H1 (cell line): ENCODE measurements at regions of chr3 and their contacts with region 1.

Region 1: DNA sequence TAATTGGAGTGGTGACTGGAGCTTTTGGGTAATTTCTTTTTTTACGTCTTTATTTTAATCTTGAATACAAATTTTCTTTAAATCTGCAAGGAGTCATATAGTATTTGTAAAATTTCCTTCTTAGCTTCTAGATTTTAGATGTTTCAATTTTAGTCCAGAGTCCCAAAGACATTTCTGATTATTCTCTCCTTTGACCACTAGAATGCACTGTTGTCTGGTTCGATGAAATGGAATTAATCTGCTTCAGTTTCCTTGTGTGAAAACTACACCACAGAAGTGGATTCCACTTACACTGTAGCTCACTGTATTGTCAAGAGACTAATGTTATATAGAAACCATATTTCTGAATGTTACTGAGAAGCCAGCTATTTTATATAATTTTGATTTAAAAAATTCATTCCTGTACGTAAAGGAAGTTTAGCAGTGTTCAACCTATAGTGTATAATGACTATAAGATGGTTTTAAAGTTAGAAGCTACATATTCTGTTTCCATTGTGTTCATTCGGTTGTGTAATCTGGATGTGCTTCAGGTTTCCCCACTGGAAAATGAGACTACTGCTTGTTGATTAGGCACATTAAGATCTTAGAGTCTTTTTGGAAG is 6.1 kb downstream of the GRAMD1C start:
- DNase-seq: no peak
- H3K4me3 ChIP-seq: no peak overlapping the region
- H3K27ac ChIP-seq: no peak overlapping the region
- H3K4me1 ChIP-seq: no peaks in the 10 kb centered on the region
- H3K27me3 ChIP-seq: no peaks in the 10 kb centered on the region
- CTCF ChIP-seq: peak in 2 of 3 experiments; percentile 30 to 57; a peak in 2 of 4 replicates
- EP300 ChIP-seq: no peak
- POLR2A ChIP-seq: no peak
- RAD21 ChIP-seq: peak; percentile 56 to 62

Region 2: DNA sequence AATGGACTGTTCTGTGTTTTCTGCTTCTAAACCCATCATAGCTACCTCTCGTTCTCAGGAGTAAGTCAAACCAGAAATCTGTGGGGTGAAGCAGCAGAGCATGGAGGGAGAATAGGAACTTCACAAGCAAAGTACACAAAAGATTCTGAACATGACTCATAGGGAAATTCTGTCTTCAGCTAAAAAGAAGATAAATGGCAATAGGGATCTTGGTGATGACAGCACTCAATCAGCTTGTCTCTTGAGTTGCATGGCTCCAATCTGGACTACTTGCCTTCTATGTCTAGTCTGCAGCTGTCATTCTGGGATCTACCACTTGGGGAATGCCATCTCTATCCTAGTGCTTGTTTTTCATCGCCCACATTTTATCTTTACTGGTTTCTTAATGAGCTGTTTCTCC is 19.6 kb before region 1 on chr3:
- CTCF ChIA-PET with region 1: interaction called, 16 read pairs
- POLR2A ChIA-PET with region 1: no interaction called
- DNase-seq: no peak
- H3K4me3 ChIP-seq: no peak overlapping the region
- H3K27ac ChIP-seq: no peak overlapping the region
- H3K4me1 ChIP-seq: peaks cover 0 to 4% (median 0%) of the 10 kb centered on the region in 4 experiments; a peak in 1 of 7 replicates
- H3K27me3 ChIP-seq: no peaks in the 10 kb centered on the region
- CTCF ChIP-seq: peak in 1 of 3 experiments; percentile 52; a peak in 1 of 4 replicates
- EP300 ChIP-seq: no peak
- POLR2A ChIP-seq: no peak
- RAD21 ChIP-seq: peak in 1 of 2 experiments; percentile 26; a peak in 2 of 4 replicates

Region 3: DNA sequence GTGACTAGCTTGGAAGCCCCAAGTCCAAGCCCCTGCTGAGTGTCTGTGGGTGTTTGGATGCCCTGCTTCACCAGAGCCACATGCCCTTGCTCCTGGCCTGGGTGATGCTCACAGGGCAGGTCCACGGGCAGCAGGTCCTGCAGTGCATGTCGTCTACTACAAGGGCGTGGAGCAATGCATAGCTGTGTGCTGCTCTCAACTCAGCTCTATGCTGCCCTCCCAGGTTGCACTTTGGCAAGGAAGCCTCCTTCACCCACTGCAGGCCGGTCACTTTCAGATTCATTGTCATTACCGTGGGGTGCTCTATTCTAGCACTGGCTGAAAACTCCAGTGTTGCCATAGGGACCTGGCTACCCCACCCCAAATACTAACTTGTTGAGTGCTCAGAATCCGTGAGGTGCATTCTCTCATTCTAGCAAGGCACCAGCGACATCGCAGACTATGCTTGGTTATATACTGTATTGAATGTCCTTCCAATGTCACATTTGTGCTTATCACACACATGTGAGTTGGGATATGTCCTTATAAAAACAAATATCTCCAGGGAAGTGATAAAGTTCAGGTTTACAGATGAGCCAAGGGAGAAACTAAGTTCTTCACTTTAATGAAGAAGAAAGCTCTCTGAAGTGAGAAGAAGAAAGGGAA is 45.7 kb after region 1 on chr3:
- CTCF ChIA-PET with region 1: interaction called, 15 read pairs
- POLR2A ChIA-PET with region 1: no interaction called
- DNase-seq: peak in 1 of 2 experiments; percentile 49
- H3K4me3 ChIP-seq: no peak overlapping the region
- H3K27ac ChIP-seq: no peak overlapping the region
- H3K4me1 ChIP-seq: peaks cover 0 to 3% (median under 1%) of the 10 kb centered on the region in 4 experiments; a peak in 2 of 7 replicates
- H3K27me3 ChIP-seq: no peaks in the 10 kb centered on the region
- CTCF ChIP-seq: peak; percentile 14 to 49 (median 40); a peak in 3 of 4 replicates
- EP300 ChIP-seq: no peak
- POLR2A ChIP-seq: no peak
- RAD21 ChIP-seq: peak; percentile 26 to 43; a peak in 3 of 4 replicates

Region 4: GRCh38 chr3:113898751-113899291 is 54.1 kb after region 1 on chr3:
- CTCF ChIA-PET with region 1: interaction called, 10 read pairs
- POLR2A ChIA-PET with region 1: no interaction called
- DNase-seq: no peak
- H3K4me3 ChIP-seq: no peak overlapping the region
- H3K27ac ChIP-seq: no peak overlapping the region
- H3K4me1 ChIP-seq: peaks cover 0 to 3% (median 0%) of the 10 kb centered on the region in 4 experiments; a peak in 1 of 7 replicates
- H3K27me3 ChIP-seq: no peaks in the 10 kb centered on the region
- CTCF ChIP-seq: no peak
- EP300 ChIP-seq: no peak
- POLR2A ChIP-seq: no peak
- RAD21 ChIP-seq: no peak

Region 5: GRCh38 chr3:113906568-113907140 is 61.9 kb after region 1 on chr3:
- CTCF ChIA-PET with region 1: interaction called, 17 read pairs
- POLR2A ChIA-PET with region 1: no interaction called
- DNase-seq: no peak
- H3K4me3 ChIP-seq: no peak overlapping the region
- H3K27ac ChIP-seq: no peak overlapping the region
- H3K4me1 ChIP-seq: no peaks in the 10 kb centered on the region
- H3K27me3 ChIP-seq: no peaks in the 10 kb centered on the region
- CTCF ChIP-seq: no peak
- EP300 ChIP-seq: no peak
- POLR2A ChIP-seq: no peak
- RAD21 ChIP-seq: no peak

Region 6: GRCh38 chr3:113912552-113913236 is 68.0 kb after region 1 on chr3:
- CTCF ChIA-PET with region 1: interaction called, 35 read pairs
- POLR2A ChIA-PET with region 1: no interaction called
- DNase-seq: no peak
- H3K4me3 ChIP-seq: no peak overlapping the region
- H3K27ac ChIP-seq: no peak overlapping the region
- H3K4me1 ChIP-seq: no peaks in the 10 kb centered on the region
- H3K27me3 ChIP-seq: no peaks in the 10 kb centered on the region
- CTCF ChIP-seq: peak in 2 of 3 experiments; percentile 79 to 80; a peak in 3 of 4 replicates
- EP300 ChIP-seq: no peak
- POLR2A ChIP-seq: no peak
- RAD21 ChIP-seq: peak; percentile 92 to 95